SK-N-SH (cell line): ENCODE measurements at regions of chr11 and their contacts with region 1.

Region 1: DNA sequence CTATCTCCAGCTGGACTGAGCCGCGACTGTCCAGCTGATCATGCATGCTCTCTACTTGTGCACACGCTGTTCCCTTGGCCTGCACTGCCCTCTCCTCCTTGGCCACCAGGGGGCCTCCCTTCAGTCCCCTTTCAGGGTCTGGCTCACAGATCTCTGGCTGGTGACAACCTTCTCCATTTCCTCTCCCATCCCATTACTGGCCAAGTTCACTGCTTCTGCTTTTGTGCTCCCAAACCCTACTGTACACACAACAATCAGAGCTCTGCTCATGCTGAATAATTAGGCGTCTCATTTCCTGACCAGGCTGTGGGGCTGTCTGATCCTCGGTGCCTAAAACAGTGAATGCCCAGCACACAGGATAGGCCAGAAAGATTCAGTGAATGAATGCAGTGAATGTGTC is 224.0 kb upstream of the NARS2 start:
- DNase-seq: peak; percentile 72
- H3K4me3 ChIP-seq: no peak overlapping the region
- H3K27ac ChIP-seq: peak overlapping the region in 1 of 2 experiments; percentile 53; a peak in 2 of 4 replicates
- H3K4me1 ChIP-seq: peaks cover 34 to 37% of the 10 kb centered on the region in 2 experiments
- H3K27me3 ChIP-seq: no peaks in the 10 kb centered on the region
- CTCF ChIP-seq: peak; percentile 85
- EP300 ChIP-seq: no peak
- RAD21 ChIP-seq: peak; percentile 81

Region 2: GRCh38 chr11:78784321-78785061 is 14.2 kb before region 1 on chr11:
- CTCF ChIA-PET with region 1: interaction called, 32 read pairs
- POLR2A ChIA-PET with region 1: no interaction called
- DNase-seq: no peak
- H3K4me3 ChIP-seq: no peak overlapping the region; a peak in 1 of 4 replicates
- H3K27ac ChIP-seq: peak overlapping the region; percentile 48 to 64; a peak in 3 of 4 replicates
- H3K4me1 ChIP-seq: peaks cover 9 to 35% of the 10 kb centered on the region in 2 experiments; a peak in 3 of 4 replicates
- H3K27me3 ChIP-seq: no peaks in the 10 kb centered on the region
- CTCF ChIP-seq: no peak
- EP300 ChIP-seq: no peak
- RAD21 ChIP-seq: no peak

Region 3: DNA sequence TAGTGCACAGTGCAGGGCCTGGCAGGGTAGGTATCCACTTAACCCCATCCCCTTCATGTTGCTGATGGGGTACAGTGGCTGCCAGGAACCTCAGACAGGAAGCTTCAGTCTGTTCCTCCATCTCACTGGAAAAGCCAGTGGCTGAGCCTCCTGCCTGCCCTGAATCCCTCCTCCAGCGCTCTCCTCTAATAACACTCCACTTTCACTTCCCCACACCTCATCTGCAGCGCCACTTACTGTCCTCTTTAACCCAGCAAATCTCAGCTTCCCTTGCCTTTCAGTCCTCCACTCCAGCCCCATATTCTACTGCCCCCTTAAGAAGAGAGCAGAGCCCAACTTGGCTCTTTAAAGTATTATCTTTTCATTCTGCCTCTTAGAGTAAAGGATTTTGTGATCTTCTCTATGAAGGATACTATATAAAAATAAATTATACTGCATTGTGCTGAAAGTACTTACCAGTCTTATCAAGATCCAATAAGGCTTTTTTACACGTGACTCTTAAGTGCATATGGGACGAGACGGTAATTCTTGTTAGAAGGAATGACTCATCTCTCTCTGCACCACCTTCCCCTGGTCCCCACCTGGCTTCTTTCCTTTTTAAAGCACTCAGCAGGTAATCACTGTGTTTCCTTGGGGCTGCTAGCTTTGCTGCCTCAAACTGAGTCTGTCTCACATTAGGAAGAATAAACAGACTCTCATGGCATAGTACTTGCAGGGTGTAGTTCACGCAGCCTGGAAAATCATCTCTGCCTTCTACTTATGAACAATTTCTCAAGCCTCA is 14.0 kb after region 1 on chr11:
- CTCF ChIA-PET with region 1: interaction called, 42 read pairs
- POLR2A ChIA-PET with region 1: no interaction called
- DNase-seq: no peak
- H3K4me3 ChIP-seq: no peak overlapping the region
- H3K27ac ChIP-seq: peak overlapping the region in 1 of 2 experiments; percentile 14; a peak in 1 of 4 replicates
- H3K4me1 ChIP-seq: peaks cover 18 to 42% of the 10 kb centered on the region in 2 experiments; a peak in 2 of 4 replicates
- H3K27me3 ChIP-seq: no peaks in the 10 kb centered on the region
- CTCF ChIP-seq: no peak
- EP300 ChIP-seq: no peak
- RAD21 ChIP-seq: no peak

Region 4: GRCh38 chr11:78820741-78821140 is 22.1 kb after region 1 on chr11:
- CTCF ChIA-PET with region 1: interaction called, 13 read pairs
- POLR2A ChIA-PET with region 1: no interaction called
- DNase-seq: no peak
- H3K4me3 ChIP-seq: no peak overlapping the region
- H3K27ac ChIP-seq: peak overlapping the region in 1 of 2 experiments; percentile 22; a peak in 1 of 4 replicates
- H3K4me1 ChIP-seq: peaks cover 0 to 11% of the 10 kb centered on the region in 2 experiments; a peak in 2 of 4 replicates
- H3K27me3 ChIP-seq: no peaks in the 10 kb centered on the region
- CTCF ChIP-seq: no peak
- EP300 ChIP-seq: no peak
- RAD21 ChIP-seq: no peak

Region 5: DNA sequence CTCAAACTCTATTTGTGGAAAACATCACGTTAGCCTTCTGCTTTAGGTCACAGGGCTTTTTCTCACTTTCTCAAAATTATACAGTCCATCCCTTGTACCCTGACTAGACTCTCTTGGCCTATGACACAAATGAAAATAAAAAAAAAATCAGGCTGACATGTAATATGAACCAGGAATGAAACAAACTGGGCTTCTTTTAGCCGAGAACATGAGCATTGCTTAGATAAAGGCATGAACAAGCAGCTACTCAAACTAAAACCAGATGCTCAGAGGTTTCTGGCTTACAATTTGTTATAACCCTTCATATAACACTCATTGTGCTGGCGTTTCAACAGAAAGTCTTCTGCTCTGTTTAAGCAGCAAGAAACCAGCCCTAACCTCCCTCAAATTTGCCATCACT is 41.5 kb after region 1 on chr11:
- CTCF ChIA-PET with region 1: interaction called, 10 read pairs
- POLR2A ChIA-PET with region 1: no interaction called
- DNase-seq: peak; percentile 36
- H3K4me3 ChIP-seq: no peak overlapping the region; a peak in 1 of 4 replicates
- H3K27ac ChIP-seq: peak overlapping the region; percentile 69 to 93; a peak in 3 of 4 replicates
- H3K4me1 ChIP-seq: peaks cover 0 to 27% of the 10 kb centered on the region in 2 experiments; a peak in 3 of 4 replicates
- H3K27me3 ChIP-seq: no peaks in the 10 kb centered on the region
- CTCF ChIP-seq: no peak
- EP300 ChIP-seq: peak in 1 of 2 experiments; percentile 50; a peak in 2 of 4 replicates
- RAD21 ChIP-seq: 0 out of 2 replicates have a peak, but pooled peaks have one; percentile 9

Region 6: GRCh38 chr11:78846269-78846668 is 47.6 kb after region 1 on chr11:
- CTCF ChIA-PET with region 1: interaction called, 12 read pairs
- POLR2A ChIA-PET with region 1: interaction called, 4 read pairs
- DNase-seq: no peak
- H3K4me3 ChIP-seq: no peak overlapping the region
- H3K27ac ChIP-seq: peak overlapping the region in 1 of 2 experiments; percentile 74; a peak in 2 of 4 replicates
- H3K4me1 ChIP-seq: peaks cover 0 to 44% of the 10 kb centered on the region in 2 experiments; a peak in 2 of 4 replicates
- H3K27me3 ChIP-seq: no peaks in the 10 kb centered on the region
- CTCF ChIP-seq: no peak
- EP300 ChIP-seq: no peak
- RAD21 ChIP-seq: no peak